ENCODE measurements at regions of chr12 and their contacts with region 1.

Region 1: DNA sequence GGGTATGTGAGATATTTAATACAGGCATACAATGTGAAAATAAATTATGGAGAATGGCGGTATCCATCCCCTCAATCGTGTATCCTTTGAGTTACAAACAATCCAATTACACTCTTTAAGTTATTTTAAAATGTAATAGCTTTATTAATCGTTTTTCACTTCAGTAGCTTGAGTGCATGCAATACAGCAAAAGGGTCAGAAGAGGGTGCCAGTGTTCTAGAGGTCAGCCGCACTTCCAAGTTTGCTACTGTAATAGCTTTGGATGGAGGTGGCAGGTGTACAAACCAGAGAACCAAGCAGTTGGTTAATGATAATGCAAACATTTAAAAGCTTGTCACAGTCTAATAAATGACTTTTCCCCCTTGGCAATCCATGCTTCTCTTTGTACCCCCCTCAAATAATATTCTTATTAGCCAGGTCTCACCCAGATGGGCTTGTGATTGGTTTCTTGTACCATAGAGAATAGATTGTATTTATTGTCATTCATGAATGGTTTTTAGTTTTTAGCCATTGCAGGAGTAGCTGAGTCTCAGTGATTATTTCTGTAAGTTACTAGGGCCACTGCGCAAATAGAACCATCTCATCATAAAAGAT is 127.0 kb downstream of the ERC1 start:
- DNase-seq: peak; percentile 45
- H3K4me3 ChIP-seq: no peak overlapping the region; a peak in 1 of 4 replicates
- H3K27ac ChIP-seq: no peak overlapping the region
- H3K4me1 ChIP-seq: peaks cover 0 to 14% of the 10 kb centered on the region in 2 experiments; a peak in 2 of 4 replicates
- H3K27me3 ChIP-seq: no peaks in the 10 kb centered on the region
- CTCF ChIP-seq: peak; percentile 99
- EP300 ChIP-seq: no peak
- RAD21 ChIP-seq: peak; percentile 97

Region 2: DNA sequence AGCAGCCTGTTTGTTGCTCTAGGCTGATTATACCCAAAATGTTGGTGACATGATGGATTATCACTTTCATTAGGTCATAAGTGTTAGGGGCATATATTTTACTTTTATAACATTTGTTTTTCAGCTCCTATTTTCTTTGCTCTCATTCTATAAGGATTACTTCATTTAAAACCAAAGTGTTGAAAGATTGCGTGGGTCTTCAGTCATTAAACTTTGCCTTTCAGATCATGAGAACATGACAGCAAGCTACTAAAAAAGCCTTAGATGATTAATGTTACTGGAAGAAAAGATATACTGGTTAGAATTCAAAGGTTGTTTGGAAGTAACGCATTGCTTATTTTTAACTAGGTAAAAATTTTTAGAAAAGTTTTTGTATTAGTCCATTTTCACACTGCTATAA is 29.8 kb after region 1 on chr12:
- CTCF ChIA-PET with region 1: interaction called, 10 read pairs
- POLR2A ChIA-PET with region 1: no interaction called
- DNase-seq: no peak
- H3K4me3 ChIP-seq: no peak overlapping the region
- H3K27ac ChIP-seq: no peak overlapping the region
- H3K4me1 ChIP-seq: no peaks in the 10 kb centered on the region
- H3K27me3 ChIP-seq: no peaks in the 10 kb centered on the region
- CTCF ChIP-seq: no peak
- EP300 ChIP-seq: no peak
- RAD21 ChIP-seq: no peak

Region 3: GRCh38 chr12:1338483-1339177 is 220.6 kb after region 1 on chr12:
- CTCF ChIA-PET with region 1: no interaction called
- POLR2A ChIA-PET with region 1: no interaction called
- DNase-seq: no peak
- H3K4me3 ChIP-seq: no peak overlapping the region
- H3K27ac ChIP-seq: no peak overlapping the region
- H3K4me1 ChIP-seq: 0 out of 4 replicates have a peak, but pooled peaks cover 0 to 4% of the 10 kb centered on the region in 2 experiments
- H3K27me3 ChIP-seq: no peaks in the 10 kb centered on the region
- CTCF ChIP-seq: no peak
- EP300 ChIP-seq: no peak
- RAD21 ChIP-seq: no peak

Region 4: GRCh38 chr12:1470051-1470450 is 352.0 kb after region 1 on chr12:
- CTCF ChIA-PET with region 1: interaction called, 10 read pairs
- POLR2A ChIA-PET with region 1: no interaction called
- DNase-seq: no peak
- H3K4me3 ChIP-seq: no peak overlapping the region
- H3K27ac ChIP-seq: 0 out of 4 replicates have a peak overlapping the region, but pooled peaks of 1 of the 2 experiments have one; percentile 96
- H3K4me1 ChIP-seq: peaks cover 16 to 41% of the 10 kb centered on the region in 2 experiments
- H3K27me3 ChIP-seq: no peaks in the 10 kb centered on the region
- CTCF ChIP-seq: no peak
- EP300 ChIP-seq: no peak
- RAD21 ChIP-seq: no peak

Region 5: DNA sequence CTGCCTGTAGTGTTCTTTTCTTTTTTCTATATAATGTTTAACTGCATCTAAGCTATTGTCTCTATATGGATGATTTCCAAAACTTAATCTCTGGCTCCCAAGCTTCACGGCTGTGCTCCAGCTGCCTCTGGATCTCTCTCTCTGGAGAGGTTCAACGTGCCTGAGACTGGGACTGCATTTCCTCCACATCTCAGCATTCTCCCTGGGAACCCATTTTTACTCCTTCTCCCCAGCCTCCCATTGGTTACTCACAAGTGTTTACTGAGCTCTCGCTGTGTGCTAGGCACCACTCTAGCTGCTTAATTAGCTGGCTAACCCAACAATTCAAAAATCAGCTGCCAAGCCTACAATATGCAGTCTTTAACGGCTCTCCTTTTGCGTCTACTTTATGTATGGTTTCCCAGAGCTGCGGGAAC is 441.6 kb after region 1 on chr12:
- CTCF ChIA-PET with region 1: interaction called, 16 read pairs
- POLR2A ChIA-PET with region 1: no interaction called
- DNase-seq: no peak
- H3K4me3 ChIP-seq: no peak overlapping the region
- H3K27ac ChIP-seq: no peak overlapping the region
- H3K4me1 ChIP-seq: peaks cover 0 to 12% of the 10 kb centered on the region in 2 experiments; a peak in 1 of 4 replicates
- H3K27me3 ChIP-seq: no peaks in the 10 kb centered on the region
- CTCF ChIP-seq: no peak
- EP300 ChIP-seq: no peak
- RAD21 ChIP-seq: no peak

Region 6: DNA sequence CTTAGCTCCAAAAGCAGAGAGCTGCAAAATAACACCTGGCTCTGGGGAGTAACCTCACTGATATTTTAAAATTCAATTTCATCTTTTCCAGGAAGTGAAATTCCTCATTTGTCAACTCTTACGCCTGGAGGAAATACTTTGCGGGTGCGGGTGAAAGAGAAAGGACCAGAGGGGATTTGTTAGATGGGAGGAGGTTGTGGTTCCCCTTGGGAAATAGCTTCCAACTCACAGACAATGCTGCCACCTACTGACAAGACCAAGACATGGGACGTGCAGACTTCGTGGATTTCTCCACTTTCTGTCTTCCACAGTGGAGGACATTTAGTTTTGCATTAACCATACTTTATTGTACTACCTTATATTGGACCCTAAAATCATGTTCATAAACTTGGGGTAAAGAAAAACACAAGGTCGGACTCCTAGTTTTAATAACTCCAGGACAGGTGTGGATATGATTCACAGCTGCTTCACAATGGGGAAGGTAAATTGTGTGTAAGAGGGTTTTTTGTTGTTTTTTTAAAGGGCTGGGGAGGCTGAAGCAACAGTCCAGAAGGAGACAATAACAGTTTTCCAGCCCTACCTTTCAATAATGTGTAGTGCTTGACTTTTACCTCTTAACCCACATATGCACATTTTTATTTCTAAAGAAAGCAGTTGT is 465.5 kb after region 1 on chr12:
- CTCF ChIA-PET with region 1: interaction called, 268 read pairs
- POLR2A ChIA-PET with region 1: interaction called, 3 read pairs
- DNase-seq: peak; percentile 81
- H3K4me3 ChIP-seq: peak overlapping the region; percentile 7 to 26; a peak in 2 of 4 replicates
- H3K27ac ChIP-seq: peak overlapping the region in 1 of 2 experiments; percentile 33; a peak in 2 of 4 replicates
- H3K4me1 ChIP-seq: peaks cover 0 to 34% of the 10 kb centered on the region in 2 experiments; a peak in 3 of 4 replicates
- H3K27me3 ChIP-seq: no peaks in the 10 kb centered on the region
- CTCF ChIP-seq: peak; percentile 93
- EP300 ChIP-seq: no peak
- RAD21 ChIP-seq: peak; percentile 97

Region 7: GRCh38 chr12:1605129-1606020 is 487.3 kb after region 1 on chr12:
- CTCF ChIA-PET with region 1: interaction called, 37 read pairs
- POLR2A ChIA-PET with region 1: interaction called, 3 read pairs
- DNase-seq: peak; percentile 79
- H3K4me3 ChIP-seq: peak overlapping the region; percentile 29 to 64
- H3K27ac ChIP-seq: peak overlapping the region; percentile 64 to 92
- H3K4me1 ChIP-seq: peaks cover 9 to 33% of the 10 kb centered on the region in 2 experiments; a peak in 3 of 4 replicates
- H3K27me3 ChIP-seq: no peaks in the 10 kb centered on the region
- CTCF ChIP-seq: peak; percentile 80
- EP300 ChIP-seq: 0 out of 4 replicates have a peak, but pooled peaks of 1 of the 2 experiments have one; percentile 27
- RAD21 ChIP-seq: peak; percentile 87

Region 8: DNA sequence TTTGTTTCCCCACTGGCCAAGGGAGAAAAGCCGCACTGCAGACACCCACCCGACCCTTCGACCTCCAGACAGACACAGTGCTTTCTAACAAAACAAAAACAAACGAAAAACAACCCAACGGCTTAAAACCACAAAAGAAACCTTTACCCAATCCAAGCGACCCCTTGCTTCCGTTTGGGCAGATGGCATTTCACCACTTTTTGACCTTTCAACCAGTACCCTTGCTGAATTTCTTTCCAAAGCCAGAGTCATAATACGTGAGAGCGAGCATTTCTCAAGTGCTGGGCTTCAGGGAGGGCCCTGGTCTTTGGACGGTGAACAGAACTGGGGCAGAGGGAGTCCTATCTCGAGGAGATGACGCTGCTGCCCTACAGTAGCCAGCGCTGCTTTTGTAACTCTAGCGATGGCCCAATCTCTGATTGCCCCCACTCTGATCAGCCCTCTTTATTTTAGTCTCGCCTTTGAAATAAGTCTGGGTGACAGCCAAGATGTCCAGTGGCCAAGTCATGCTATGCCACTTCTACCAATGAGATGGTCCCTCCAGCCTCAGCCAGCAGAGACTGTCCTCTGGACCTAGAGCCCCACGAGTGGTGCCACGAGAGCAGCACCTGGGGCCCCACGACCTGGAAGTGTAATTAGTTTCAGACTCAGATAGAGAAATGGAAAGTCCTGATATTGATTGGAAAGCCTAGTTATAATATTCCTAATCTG is 550.9 kb after region 1 on chr12:
- CTCF ChIA-PET with region 1: no interaction called
- POLR2A ChIA-PET with region 1: no interaction called
- DNase-seq: no peak
- H3K4me3 ChIP-seq: no peak overlapping the region
- H3K27ac ChIP-seq: no peak overlapping the region
- H3K4me1 ChIP-seq: no peaks in the 10 kb centered on the region
- H3K27me3 ChIP-seq: no peaks in the 10 kb centered on the region
- CTCF ChIP-seq: no peak
- EP300 ChIP-seq: no peak
- RAD21 ChIP-seq: no peak

Measured in SK-N-SH (cell line).